Aorta (tissue), 5 donors: ENCODE measurements at regions of chr19 and their contacts with region 1.

Region 1: GRCh38 chr19:38759590-38760003 is 13.7 kb downstream of the LGALS7 start:
- DNase-seq: no peak
- ATAC-seq: no peak
- H3K4me3 ChIP-seq: no peak overlapping the region
- H3K27ac ChIP-seq: no peak overlapping the region
- H3K4me1 ChIP-seq: no peaks in the 10 kb centered on the region
- H3K27me3 ChIP-seq: no peaks in the 10 kb centered on the region

Region 2: DNA sequence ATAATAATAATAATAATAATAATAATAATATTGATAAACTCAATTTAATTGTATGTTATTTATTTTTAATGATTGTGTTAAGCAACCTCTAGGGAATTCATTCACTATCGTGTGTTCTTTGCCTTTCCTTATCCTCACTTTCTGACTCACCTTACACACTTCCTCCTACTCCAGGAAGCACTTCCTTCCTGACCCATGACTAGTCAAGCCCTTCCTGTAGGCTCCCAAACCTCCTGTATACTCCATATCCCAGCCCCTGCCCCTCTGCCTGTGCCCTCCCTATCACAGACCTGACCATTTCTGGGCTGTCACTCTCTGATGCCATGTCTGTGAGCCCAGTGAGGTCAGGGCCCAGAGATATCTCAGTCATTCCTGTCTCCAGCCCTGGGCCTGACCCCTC is 45.6 kb after region 1 on chr19:
- intact Hi-C with region 1: loop called in 1 of 2 experiments (anchors 10 kb)
- DNase-seq: peak in 1 of 2 donors; percentile 35
- ATAC-seq: no peak
- H3K4me3 ChIP-seq: no peak overlapping the region
- H3K27ac ChIP-seq: no peak overlapping the region
- H3K4me1 ChIP-seq: no peaks in the 10 kb centered on the region
- H3K27me3 ChIP-seq: no peaks in the 10 kb centered on the region